ENCODE measurements at regions of chr1 and their contacts with region 1.

Region 1: DNA sequence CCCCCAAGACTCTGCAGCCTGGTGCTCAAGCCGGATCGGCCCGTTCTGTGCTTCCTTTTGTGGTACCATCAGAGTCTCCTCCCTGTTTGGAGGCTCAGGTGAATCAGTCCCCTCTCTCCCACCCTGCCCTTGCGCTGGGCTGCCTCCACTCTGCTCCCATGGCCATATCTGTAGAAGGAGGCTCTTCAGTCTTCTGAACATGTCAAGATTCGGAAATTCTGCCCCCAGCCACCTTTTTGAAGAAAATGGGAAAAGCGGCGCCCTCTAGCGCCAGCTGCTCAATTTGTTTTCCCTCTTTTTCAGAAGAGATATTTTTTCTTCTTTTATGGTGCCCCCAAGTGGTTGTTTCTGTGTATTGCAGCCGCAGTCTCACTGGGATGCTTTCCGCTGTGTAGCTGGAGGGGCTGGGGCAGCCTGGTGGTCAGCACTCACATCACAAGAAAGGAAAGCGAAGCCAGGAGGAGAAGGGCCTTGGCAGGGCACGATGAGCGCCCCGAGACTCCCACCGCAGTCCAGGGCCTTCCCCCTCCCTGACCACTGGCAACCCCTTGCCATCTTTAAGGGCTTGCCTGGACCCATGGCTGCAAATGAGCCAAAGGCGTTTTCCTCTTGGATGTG is 58.4 kb upstream of the CACNA1E start:
- DNase-seq: peak; percentile 92
- H3K4me3 ChIP-seq: no peak overlapping the region
- H3K27ac ChIP-seq: no peak overlapping the region
- H3K4me1 ChIP-seq: peaks cover 8% of the 10 kb centered on the region
- H3K27me3 ChIP-seq: no peaks in the 10 kb centered on the region
- CTCF ChIP-seq: peak; percentile 97 to 98 (median 98)
- POLR2A ChIP-seq: no peak

Region 2: GRCh38 chr1:180816132-180816855 is 608.6 kb before region 1 on chr1:
- intact Hi-C with region 1: no loop called
- DNase-seq: no peak
- H3K4me3 ChIP-seq: no peak overlapping the region
- H3K27ac ChIP-seq: no peak overlapping the region
- H3K4me1 ChIP-seq: no peaks in the 10 kb centered on the region
- H3K27me3 ChIP-seq: no peaks in the 10 kb centered on the region
- CTCF ChIP-seq: no peak
- POLR2A ChIP-seq: no peak

Region 3: DNA sequence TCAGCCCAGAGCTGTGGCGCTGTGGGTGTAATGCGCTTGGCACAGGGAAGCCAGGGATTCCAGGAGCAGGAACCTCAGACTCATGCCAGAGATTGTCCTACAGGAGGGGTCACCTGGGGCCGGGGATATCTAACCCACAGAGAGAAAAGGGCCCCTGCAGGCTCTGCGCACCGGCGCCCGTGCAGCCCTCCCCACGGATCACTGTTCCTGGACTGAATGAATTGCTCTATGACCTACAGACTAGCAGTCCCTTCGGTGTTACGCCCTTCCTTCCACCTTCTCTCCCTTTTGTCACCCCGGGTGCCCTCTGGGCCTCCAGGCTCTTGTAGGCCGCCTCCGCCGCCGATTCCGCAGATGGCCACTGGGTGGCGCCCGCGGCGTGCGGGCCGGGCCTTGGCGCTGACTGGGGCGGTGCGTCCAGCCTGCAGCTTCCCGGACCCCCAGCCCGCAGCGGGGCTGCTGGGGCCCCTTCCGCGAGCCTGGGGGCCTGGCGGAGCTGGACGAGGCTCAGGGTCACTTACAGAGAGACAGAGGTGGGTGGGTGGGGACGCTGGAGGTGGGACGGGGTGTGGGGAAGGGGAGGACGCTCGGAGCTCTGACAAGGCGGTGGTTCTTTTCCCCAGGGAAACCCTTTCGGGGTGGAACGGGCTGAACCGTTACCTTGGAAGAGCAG is 235.1 kb before region 1 on chr1:
- intact Hi-C with region 1: loop called (anchors 10 kb)
- DNase-seq: peak; percentile 84
- H3K4me3 ChIP-seq: peak overlapping the region; percentile 41 to 59
- H3K27ac ChIP-seq: no peak overlapping the region
- H3K4me1 ChIP-seq: peaks cover 5% of the 10 kb centered on the region
- H3K27me3 ChIP-seq: no peaks in the 10 kb centered on the region
- CTCF ChIP-seq: peak; percentile 89 to 99 (median 95)
- POLR2A ChIP-seq: no peak

Region 4: GRCh38 chr1:181525104-181525721 is 100.3 kb after region 1 on chr1:
- intact Hi-C with region 1: no loop called
- DNase-seq: no peak
- H3K4me3 ChIP-seq: no peak overlapping the region
- H3K27ac ChIP-seq: no peak overlapping the region
- H3K4me1 ChIP-seq: no peaks in the 10 kb centered on the region
- H3K27me3 ChIP-seq: no peaks in the 10 kb centered on the region
- CTCF ChIP-seq: no peak
- POLR2A ChIP-seq: no peak

Region 5: GRCh38 chr1:181557313-181557712 is 132.4 kb after region 1 on chr1:
- intact Hi-C with region 1: no loop called
- DNase-seq: no peak
- H3K4me3 ChIP-seq: no peak overlapping the region
- H3K27ac ChIP-seq: no peak overlapping the region
- H3K4me1 ChIP-seq: no peaks in the 10 kb centered on the region
- H3K27me3 ChIP-seq: no peaks in the 10 kb centered on the region
- CTCF ChIP-seq: no peak
- POLR2A ChIP-seq: no peak